ENCODE measurements at regions of chr3 and their contacts with region 1.

Region 1: GRCh38 chr3:31539275-31539674 is 6.5 kb downstream of the STT3B start:
- DNase-seq: no peak
- ATAC-seq: no peak
- H3K4me3 ChIP-seq: no peak overlapping the region
- H3K27ac ChIP-seq: no peak overlapping the region
- H3K4me1 ChIP-seq: peaks cover 58% of the 10 kb centered on the region
- CTCF ChIP-seq: no peak
- EP300 ChIP-seq: no peak
- POLR2A ChIP-seq: no peak
- RAD21 ChIP-seq: no peak

Region 2: DNA sequence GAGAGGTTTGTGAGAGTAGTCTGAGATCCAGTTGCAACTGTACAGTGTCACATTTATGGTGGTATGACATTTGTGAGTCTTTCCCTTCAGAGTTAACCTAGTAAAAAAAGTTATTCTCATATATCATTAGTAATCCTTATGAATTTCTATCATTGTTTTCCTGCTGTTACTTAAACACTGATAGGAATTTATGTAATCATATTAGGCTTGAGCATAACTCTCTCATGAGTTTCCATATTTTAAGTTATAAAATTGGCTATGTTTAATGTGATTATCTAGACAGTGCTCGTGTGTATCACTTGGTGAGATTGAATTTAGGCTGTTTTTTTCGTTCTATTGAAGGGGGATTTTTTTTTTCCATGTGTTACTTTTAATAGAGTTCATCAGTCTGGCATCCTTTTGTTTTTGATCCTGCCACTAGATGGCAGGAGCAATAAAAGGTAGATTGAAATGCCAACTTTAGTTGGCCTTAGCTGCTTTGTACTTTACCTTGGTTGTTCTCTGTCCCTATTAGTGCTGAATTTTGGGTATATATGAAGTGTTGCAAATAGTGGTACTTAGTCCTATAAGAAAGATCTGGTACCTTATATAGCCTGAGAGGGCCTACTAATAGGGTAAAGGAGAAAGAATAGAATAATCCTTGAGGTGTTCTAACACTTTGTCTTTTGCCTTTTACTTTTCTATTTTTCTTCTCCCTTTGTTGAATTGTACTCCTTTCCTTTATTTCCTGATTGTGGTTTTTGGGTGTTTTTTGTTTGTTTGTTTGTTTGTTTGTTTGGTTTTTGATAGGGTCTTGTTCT is 11.4 kb after region 1 on chr3:
- CTCF ChIA-PET with region 1: interaction called, 15 read pairs
- POLR2A ChIA-PET with region 1: no interaction called
- DNase-seq: peak; percentile 27 to 34
- ATAC-seq: peak; percentile 81 to 82
- H3K4me3 ChIP-seq: no peak overlapping the region
- H3K27ac ChIP-seq: no peak overlapping the region
- H3K4me1 ChIP-seq: peaks cover 15% of the 10 kb centered on the region; the same call in 2 of the 3 replicates
- CTCF ChIP-seq: peak; percentile 79
- EP300 ChIP-seq: no peak
- POLR2A ChIP-seq: no peak
- RAD21 ChIP-seq: peak; percentile 51 to 61